ENCODE measurements at regions of chr1 and their contacts with region 1.

Region 1: DNA sequence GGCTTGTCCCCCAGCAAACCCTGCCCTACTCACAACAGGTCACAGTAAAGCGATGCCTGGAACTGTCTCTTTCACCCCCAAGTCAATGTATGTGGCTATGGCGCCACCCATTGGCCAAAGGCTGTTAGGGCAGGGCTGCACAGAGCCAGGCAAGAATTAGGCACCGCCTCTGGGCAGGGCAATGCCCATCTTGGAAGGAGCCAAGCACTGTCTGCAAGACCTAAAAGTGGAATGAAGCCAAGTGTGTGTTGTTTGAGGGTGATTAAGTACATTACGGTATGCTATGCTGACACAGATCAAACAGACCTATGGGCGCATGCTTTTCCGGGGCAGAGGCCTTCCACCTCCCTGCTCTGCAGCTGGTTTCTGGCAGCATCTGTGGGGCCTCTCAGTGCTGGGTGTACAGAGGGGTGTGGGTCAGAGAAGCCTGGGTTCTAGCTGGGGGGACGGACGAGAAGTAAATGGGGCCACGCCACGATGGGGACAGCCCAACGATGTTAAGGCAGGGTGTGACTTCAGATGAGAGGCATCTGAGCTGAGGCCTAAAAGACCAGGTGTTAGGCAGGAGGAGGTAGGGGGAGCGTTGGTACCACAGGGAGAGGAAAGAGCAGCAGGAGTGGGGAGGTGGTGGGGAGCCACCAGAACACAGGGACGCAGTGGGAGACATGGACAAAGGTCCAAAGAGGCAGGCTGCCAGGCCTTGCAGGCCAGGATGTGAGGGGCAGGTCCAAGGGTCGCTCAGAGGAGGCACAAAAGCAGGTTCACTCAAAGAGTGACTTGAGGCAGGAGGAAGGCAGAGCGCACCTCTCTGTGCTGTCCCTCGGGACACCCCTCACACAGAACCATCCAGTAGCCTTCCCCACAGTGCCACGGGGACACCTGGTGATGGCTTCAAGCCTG is 49.8 kb downstream of the ACOT7 start:
- DNase-seq: peak in 1 of 2 donors; percentile 40
- ATAC-seq: peak; percentile 61 to 73
- H3K4me3 ChIP-seq: no peak overlapping the region
- H3K27ac ChIP-seq: no peak overlapping the region
- H3K4me1 ChIP-seq: no peaks in the 10 kb centered on the region
- H3K27me3 ChIP-seq: no peaks in the 10 kb centered on the region
- CTCF ChIP-seq: peak; percentile 35 to 82 (median 72)
- POLR2A ChIP-seq: no peak

Region 2: DNA sequence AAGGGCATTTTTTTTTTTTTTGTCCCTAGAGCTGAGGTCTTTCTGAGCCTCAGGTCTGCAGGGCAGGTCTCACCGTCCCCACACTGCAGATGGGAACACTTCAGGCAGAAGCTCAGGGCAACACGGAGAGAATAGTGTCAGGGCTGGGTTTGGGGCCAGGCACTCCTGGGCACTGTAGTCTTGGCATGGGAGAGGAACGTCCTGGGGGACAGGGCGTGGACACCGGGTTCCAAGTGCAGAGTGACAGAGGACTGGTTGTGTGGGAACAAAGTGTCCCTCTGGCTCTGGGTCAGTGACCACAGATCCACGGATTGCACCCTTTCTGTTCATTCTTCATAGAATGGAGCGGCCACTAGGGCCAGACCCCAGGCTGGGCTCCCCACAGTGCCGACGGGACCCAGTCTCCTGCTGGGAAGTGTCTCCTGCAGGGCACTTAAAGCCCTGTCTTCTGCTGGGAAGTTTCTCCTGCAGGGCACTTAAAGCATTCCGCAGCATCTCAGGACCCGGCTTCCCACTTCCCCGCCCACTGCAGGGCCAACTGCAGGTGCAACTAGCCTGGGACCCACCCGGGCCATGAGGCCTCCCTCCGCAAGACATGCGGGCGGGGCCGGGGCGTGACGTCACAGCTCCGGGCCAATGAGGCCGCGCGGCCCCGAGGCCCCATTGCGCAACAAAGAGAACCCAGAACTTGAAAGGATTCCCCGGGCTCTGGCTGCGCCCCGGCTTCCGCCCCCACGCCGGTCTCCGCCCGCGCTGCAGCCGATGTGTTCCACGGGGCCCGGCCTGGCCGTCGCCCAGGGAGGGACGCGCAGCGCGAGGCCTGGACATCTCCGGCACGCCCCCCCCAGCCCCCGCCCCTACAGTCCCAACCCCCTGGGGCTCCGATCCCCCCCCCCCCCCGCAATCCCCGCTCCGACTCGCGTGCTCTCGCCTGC is 84.0 kb before region 1 on chr1:
- in situ Hi-C with region 1: loop called in 1 of 4 experiments (anchors 10 kb)
- intact Hi-C with region 1: no loop called
- DNase-seq: peak; percentile 50 to 59
- ATAC-seq: peak; percentile 50 to 63
- H3K4me3 ChIP-seq: peak overlapping the region; percentile 49 to 56 (median 54)
- H3K27ac ChIP-seq: peak overlapping the region in 3 of 4 donors; percentile 34 to 61 (median 49)
- H3K4me1 ChIP-seq: peaks cover 0 to 16% of the 10 kb centered on the region in 2 donors
- H3K27me3 ChIP-seq: peaks cover 30 to 51% (median 44%) of the 10 kb centered on the region in 3 donors
- CTCF ChIP-seq: peak in 1 of 5 experiments; percentile 10
- POLR2A ChIP-seq: no peak